ENCODE measurements at regions of chr19 and their contacts with region 1.

Region 1: DNA sequence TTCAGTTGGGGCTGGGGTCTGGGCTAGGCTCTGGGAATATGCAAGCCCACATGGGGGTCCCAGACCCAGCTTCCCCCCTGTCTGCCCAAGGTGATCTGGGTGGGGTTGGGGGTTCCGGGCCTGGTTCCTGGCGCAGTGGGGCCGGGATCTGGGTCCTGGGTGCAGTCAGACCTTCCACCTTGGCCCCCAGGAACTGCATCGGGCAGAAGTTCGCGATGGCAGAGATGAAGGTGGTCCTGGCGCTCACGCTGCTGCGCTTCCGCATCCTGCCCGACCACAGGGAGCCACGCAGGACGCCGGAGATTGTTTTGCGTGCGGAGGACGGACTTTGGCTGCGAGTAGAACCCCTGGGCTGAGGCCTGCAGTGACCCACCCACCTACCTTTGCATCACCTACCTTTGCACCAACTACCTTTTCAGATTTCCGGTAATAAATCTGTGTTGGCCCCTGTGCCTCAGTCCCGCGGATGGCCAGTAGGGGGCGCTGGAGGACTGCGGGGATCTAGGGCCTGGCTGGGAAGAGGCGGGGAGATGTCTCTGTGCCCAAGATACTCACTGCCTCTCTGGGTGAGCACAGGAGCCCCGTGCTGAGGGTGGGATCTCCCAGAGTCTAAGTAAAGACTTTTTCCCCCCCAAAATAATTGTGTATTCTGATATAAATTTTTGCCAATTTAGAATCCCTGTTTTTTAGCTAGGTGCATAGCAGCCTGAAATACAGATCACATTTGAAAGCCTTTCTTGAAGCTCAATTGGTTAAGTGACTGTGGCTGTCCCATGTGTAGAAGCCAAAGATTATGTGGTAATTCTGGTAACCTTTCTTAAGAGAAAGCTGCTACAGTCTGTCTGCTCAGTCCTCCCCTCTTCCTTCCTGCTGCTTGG is 11.5 kb upstream of the CYP4F3 start:
- DNase-seq: peak; percentile 74 to 94 (median 85)
- ATAC-seq: peak; percentile 98
- H3K4me3 ChIP-seq: no peak overlapping the region
- H3K4me3 Mint-ChIP-seq: peak overlapping the region in 2 of 10 donors; percentile 6 to 37
- H3K27ac ChIP-seq: no peak overlapping the region
- H3K27ac Mint-ChIP-seq: peak overlapping the region in 1 of 9 donors; percentile 67
- H3K4me1 ChIP-seq: peaks cover 0 to 6% of the 10 kb centered on the region in 2 donors
- H3K4me1 Mint-ChIP-seq: no peaks in the 10 kb centered on the region
- H3K27me3 ChIP-seq: no peaks in the 10 kb centered on the region
- H3K27me3 Mint-ChIP-seq: peaks cover 5 to 43% (median 32%) of the 10 kb centered on the region in 5 donors

Region 2: GRCh38 chr19:15869109-15869555 is 239.9 kb after region 1 on chr19:
- CTCF ChIA-PET with region 1: interaction called, 13 read pairs
- POLR2A ChIA-PET with region 1: no interaction called
- intact Hi-C with region 1: loop called (anchors 1 to 2 kb)
- DNase-seq: peak in 7 of 9 donors; percentile 24 to 55 (median 45)
- ATAC-seq: peak; percentile 89
- H3K4me3 ChIP-seq: no peak overlapping the region
- H3K4me3 Mint-ChIP-seq: no peak overlapping the region
- H3K27ac ChIP-seq: no peak overlapping the region
- H3K27ac Mint-ChIP-seq: peak overlapping the region in 2 of 9 donors; percentile 0 to 12
- H3K4me1 ChIP-seq: peaks cover 4 to 5% of the 10 kb centered on the region in 2 donors
- H3K4me1 Mint-ChIP-seq: peaks cover 5 to 20% (median 12%) of the 10 kb centered on the region in 7 donors
- H3K27me3 ChIP-seq: no peaks in the 10 kb centered on the region
- H3K27me3 Mint-ChIP-seq: peaks cover 6 to 13% (median 9%) of the 10 kb centered on the region in 5 donors

Region 3: GRCh38 chr19:16041299-16041990 is 412.2 kb after region 1 on chr19:
- CTCF ChIA-PET with region 1: no interaction called
- POLR2A ChIA-PET with region 1: no interaction called
- intact Hi-C with region 1: loop called (anchors 5 to 10 kb)
- DNase-seq: peak; percentile 47 to 85 (median 67)
- ATAC-seq: peak; percentile 90
- H3K4me3 ChIP-seq: no peak overlapping the region
- H3K4me3 Mint-ChIP-seq: peak overlapping the region; percentile 23 to 76 (median 50)
- H3K27ac ChIP-seq: no peak overlapping the region
- H3K27ac Mint-ChIP-seq: peak overlapping the region in 2 of 9 donors; percentile 15 to 49
- H3K4me1 ChIP-seq: peaks cover 0 to 7% of the 10 kb centered on the region in 2 donors
- H3K4me1 Mint-ChIP-seq: peaks cover 6 to 22% (median 15%) of the 10 kb centered on the region in 7 donors
- H3K27me3 ChIP-seq: no peaks in the 10 kb centered on the region
- H3K27me3 Mint-ChIP-seq: peaks cover 0 to 23% (median 0%) of the 10 kb centered on the region in 5 donors

Measured in naive thymus-derived CD4-positive, alpha-beta T cell (primary cell).